ENCODE measurements at regions of chr13 and their contacts with region 1.

Region 1: DNA sequence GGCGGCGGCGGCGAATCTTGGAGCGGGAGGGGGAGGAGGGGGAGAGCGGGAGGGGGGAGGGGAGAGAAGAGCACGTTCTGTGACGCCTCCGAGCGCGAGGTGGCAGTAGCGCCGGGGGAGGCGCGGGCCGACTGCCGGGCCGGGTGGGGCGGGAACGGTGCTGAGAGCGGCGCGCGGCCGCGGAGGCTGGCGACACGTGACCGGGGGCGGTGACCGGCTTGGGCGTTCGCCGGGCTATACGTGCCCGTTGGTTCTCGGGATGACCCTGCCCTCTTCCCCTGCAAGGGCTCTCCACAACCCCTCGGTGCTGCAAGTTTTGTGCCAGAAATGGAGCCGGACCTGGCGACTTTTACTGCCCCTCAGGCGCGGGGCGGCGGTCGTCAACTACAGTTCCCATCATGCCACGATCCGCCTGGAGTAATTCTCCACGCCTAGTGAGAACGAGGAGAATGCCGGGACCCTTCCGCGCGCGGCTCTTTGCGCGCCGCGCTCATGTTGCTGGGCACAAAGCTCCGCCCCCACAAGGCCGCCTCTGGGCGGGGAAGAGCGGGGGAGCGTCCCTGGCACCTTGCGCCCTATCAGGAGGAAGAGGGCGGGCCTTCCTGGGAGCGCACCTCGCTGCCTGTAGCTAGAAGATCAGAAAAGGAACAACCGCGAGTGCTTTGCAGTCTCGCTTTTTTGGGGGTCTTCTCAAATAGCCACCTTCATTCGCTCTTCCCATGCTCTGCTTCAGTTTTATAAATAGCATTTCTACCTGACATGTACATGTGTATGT is at the start of gene KPNA3:
- DNase-seq: peak; percentile 94 to 96 (median 95)
- H3K4me3 ChIP-seq: peak within 1 kb of the TSS; percentile 74 to 80
- H3K4me3 Mint-ChIP-seq: peak within 1 kb of the TSS; percentile 96 to 99 (median 97)
- H3K27ac ChIP-seq: peak within 1 kb of the TSS; percentile 74
- H3K27ac Mint-ChIP-seq: peak within 1 kb of the TSS; percentile 92 to 98 (median 98)
- H3K4me1 ChIP-seq: peaks cover 37% of the 10 kb centered on the region
- H3K4me1 Mint-ChIP-seq: peaks cover 22 to 42% (median 36%) of the 10 kb centered on the region in 4 donors
- H3K27me3 ChIP-seq: no peaks in the 10 kb centered on the region
- H3K27me3 Mint-ChIP-seq: peaks cover 0 to 5% of the 10 kb centered on the region in 2 donors
- total RNA-seq, gene KPNA3: 21.1 to 22.4 TPM

Region 2: DNA sequence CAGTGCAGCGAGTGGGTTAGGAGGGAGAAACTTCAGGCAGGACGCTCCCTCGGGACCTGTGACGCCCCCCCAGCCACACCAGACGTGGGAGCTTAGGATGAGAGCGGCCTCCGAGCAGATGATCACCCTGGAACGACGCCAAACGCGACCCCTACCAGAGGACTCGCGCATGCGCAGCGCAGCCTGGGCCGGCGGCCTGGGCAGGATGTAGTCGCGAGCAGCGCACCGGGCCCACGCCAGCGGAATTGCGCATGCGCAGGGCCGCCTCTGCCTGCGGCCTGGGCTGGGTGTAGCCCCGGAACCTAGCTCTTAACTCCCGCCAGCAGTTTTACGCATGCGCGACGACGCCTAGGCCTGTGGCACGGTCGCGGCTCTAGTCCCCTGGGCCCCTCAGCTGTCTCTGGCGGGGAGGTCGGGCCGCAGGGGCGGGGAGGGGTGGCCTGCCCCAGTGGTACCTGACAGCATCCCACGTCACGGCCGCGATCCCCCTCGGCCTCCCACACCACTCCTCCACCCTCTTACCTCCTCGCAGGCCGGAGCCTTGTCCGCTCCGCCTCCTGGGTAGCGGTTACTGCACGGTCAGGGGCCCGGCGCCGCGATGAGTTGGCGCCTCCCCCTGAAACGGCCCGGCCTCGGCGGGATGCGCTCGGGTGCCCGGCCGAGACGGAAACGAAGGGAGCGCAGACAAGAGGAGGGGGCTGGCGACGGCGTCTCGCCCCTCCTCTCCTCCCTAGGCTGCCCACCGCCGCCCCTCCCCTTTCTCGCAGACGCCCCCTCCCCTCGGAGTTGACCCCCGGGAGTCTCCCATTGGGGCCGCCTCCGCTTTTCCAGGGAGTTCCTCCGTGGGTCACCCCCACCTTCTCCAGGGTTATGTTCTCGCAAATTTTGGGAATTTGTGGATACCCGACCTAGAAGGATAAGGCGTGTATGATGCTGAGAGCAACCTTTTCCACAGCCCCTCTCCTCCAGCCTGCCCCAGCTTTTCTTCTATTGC is 1259.9 kb before region 1 on chr13 and contains the start of gene RCBTB2:
- CTCF ChIA-PET with region 1: no interaction called
- POLR2A ChIA-PET with region 1: no interaction called
- intact Hi-C with region 1: loop called (anchors 2 kb)
- DNase-seq: peak; percentile 97 to 99 (median 98)
- H3K4me3 ChIP-seq: peak within 1 kb of the TSS; percentile 70 to 75
- H3K4me3 Mint-ChIP-seq: peak within 1 kb of the TSS; percentile 92 to 98 (median 94)
- H3K27ac ChIP-seq: peak within 1 kb of the TSS; percentile 92
- H3K27ac Mint-ChIP-seq: peak within 1 kb of the TSS; percentile 97 to 99 (median 99)
- H3K4me1 ChIP-seq: peaks cover 46% of the 10 kb centered on the region
- H3K4me1 Mint-ChIP-seq: peaks cover 20 to 55% (median 36%) of the 10 kb centered on the region in 4 donors
- H3K27me3 ChIP-seq: no peaks in the 10 kb centered on the region
- H3K27me3 Mint-ChIP-seq: no peaks in the 10 kb centered on the region
- total RNA-seq, gene RCBTB2: 23.9 to 25.7 TPM

Region 3: GRCh38 chr13:49443704-49444523 is 348.8 kb before region 1 on chr13 and contains the starts of genes CAB39L and SETDB2:
- CTCF ChIA-PET with region 1: no interaction called
- POLR2A ChIA-PET with region 1: interaction called, 35 read pairs
- intact Hi-C with region 1: loop called (anchors 1 kb)
- DNase-seq: peak; percentile 99 to 100 (median 100)
- H3K4me3 ChIP-seq: peak within 1 kb of the TSS; percentile 72 to 88
- H3K4me3 Mint-ChIP-seq: peak within 1 kb of the TSS; percentile 92 to 98 (median 96)
- H3K27ac ChIP-seq: peak within 1 kb of the TSS; percentile 79
- H3K27ac Mint-ChIP-seq: peak within 1 kb of the TSS; percentile 93 to 99 (median 99)
- H3K4me1 ChIP-seq: peaks cover 50% of the 10 kb centered on the region
- H3K4me1 Mint-ChIP-seq: peaks cover 28 to 58% (median 41%) of the 10 kb centered on the region in 4 donors
- H3K27me3 ChIP-seq: no peaks in the 10 kb centered on the region
- H3K27me3 Mint-ChIP-seq: no peaks in the 10 kb centered on the region
- total RNA-seq, gene CAB39L: 5.7 to 7.7 TPM
- total RNA-seq, gene SETDB2: 27.6 to 28.2 TPM

Region 4: DNA sequence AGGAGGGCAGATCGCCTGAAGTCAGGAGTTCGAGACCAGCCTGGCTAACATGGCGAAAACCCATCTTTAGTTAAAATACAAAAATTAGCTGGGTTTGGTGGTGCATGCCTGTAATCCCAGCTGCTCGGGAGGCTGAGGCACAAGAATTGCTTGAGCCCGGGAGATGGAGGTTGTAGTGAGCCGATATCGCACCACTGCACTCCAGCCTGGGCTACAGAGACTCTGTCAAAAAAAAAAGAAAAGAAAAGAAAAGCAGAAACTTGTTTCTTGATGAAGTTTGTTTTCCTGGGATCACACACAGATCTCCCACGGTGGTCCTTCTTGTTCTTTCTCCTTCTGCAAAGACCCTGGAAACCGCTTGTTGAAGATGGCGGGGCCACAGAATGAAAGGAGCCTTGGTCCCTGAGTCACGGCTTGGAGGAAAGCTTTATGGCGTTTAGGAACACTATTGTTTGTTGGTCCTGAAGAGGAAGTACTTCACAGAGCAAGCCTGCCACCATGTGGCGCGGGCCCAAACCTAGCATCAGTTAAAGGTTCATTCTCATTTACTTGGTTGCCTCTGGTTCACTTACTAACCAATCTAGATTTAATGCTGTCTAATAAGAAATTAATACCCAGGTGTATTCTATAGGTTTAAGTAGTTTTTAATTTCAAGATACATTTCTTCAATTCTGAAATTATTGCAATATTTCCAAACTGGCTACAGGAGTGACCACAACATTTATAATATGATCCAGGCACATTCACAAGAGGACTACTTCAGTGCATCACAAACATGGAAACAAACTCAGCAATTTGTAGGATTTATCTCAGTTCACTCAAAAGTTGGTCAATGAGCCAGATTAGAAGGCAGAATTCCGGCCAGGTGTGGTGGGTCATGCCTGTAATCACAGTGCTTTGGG is 185.7 kb before region 1 on chr13:
- CTCF ChIA-PET with region 1: interaction called, 3 read pairs
- POLR2A ChIA-PET with region 1: no interaction called
- intact Hi-C with region 1: loop called (anchors 5 kb)
- DNase-seq: peak; percentile 72 to 78 (median 77)
- H3K4me3 ChIP-seq: peak overlapping the region in 1 of 2 donors; percentile 13
- H3K4me3 Mint-ChIP-seq: peak overlapping the region; percentile 82 to 95 (median 89)
- H3K27ac ChIP-seq: no peak overlapping the region
- H3K27ac Mint-ChIP-seq: peak overlapping the region in 6 of 7 donors; percentile 22 to 95 (median 72)
- H3K4me1 ChIP-seq: no peaks in the 10 kb centered on the region
- H3K4me1 Mint-ChIP-seq: peaks cover 2 to 5% (median 3%) of the 10 kb centered on the region in 4 donors
- H3K27me3 ChIP-seq: no peaks in the 10 kb centered on the region
- H3K27me3 Mint-ChIP-seq: no peaks in the 10 kb centered on the region

Region 5: DNA sequence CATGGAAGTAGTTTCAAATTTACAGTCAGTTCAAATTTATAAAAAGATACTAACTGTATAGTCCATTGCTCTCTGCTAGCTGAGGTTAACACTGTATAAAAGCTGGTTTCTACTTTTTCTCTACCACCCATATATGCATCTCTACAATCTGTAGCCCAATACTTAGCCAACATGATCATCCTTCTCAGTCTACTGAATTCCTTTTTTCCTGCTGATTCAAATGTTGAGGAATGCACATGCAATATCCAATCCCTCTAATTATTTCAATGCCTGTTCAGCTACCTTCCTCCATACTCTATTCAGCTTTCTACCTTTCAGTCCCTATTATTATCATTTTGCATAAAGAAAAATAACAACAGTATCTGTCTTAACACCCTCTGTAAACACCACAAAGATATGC is 15.9 kb before region 1 on chr13:
- CTCF ChIA-PET with region 1: interaction called, 6 read pairs
- POLR2A ChIA-PET with region 1: interaction called, 12 read pairs
- intact Hi-C with region 1: no loop called
- DNase-seq: no peak
- H3K4me3 ChIP-seq: no peak overlapping the region
- H3K4me3 Mint-ChIP-seq: no peak overlapping the region
- H3K27ac ChIP-seq: no peak overlapping the region
- H3K27ac Mint-ChIP-seq: peak overlapping the region in 1 of 7 donors; percentile 24
- H3K4me1 ChIP-seq: peaks cover 16% of the 10 kb centered on the region
- H3K4me1 Mint-ChIP-seq: peaks cover 41 to 66% (median 50%) of the 10 kb centered on the region in 4 donors
- H3K27me3 ChIP-seq: no peaks in the 10 kb centered on the region
- H3K27me3 Mint-ChIP-seq: no peaks in the 10 kb centered on the region

Region 6: DNA sequence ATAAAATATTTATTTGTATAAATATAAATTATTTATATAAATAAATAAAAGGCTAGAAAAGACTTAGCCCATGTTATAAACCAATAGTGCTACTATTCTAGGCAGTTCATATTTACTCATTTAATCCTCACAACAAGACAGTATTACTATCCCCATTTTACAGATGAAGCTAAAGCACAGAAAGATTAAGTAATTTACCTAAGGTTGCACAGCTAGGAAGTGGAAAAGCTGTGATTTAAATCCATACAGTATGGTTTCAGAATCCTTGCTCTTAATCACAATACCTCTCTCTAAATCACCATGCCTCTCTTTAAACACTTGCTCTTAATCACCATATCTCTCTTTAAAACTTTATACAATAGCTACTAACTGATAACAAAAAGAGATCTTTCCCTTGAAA is 129.6 kb after region 1 on chr13:
- CTCF ChIA-PET with region 1: no interaction called
- POLR2A ChIA-PET with region 1: no interaction called
- intact Hi-C with region 1: no loop called
- DNase-seq: no peak
- H3K4me3 ChIP-seq: no peak overlapping the region
- H3K4me3 Mint-ChIP-seq: no peak overlapping the region
- H3K27ac ChIP-seq: no peak overlapping the region
- H3K27ac Mint-ChIP-seq: no peak overlapping the region
- H3K4me1 ChIP-seq: no peaks in the 10 kb centered on the region
- H3K4me1 Mint-ChIP-seq: no peaks in the 10 kb centered on the region
- H3K27me3 ChIP-seq: no peaks in the 10 kb centered on the region
- H3K27me3 Mint-ChIP-seq: no peaks in the 10 kb centered on the region

Region 7: DNA sequence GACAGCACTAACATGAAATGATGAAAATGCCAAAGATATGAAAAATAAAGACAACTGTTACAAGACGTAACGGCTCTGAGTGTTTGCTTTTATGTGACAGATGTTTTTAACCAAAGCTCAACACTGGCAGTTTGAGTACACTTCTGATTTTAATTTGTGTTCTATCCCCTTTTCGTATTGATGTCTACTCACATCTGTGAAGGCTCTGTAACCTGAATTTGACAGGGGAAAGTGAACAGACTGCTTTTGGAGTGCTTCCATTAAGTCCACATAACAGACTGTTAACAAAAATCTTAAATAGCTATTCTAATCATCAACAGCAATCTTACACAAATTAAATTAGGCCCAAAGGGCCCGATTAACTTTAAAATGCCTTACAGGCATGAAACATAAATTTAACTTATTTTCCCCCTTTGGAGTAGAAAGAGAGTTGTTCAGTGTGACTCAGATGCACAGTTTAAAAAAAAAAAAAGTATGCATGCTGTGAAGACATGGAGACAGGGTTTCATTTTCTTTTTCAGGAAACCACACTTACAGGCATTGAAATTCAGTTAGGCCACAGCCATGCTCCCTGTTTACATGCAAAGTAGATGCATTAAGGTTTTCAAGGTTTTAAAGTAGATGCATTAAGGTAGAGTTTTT is 1100.6 kb after region 1 on chr13:
- CTCF ChIA-PET with region 1: no interaction called
- POLR2A ChIA-PET with region 1: interaction called, 9 read pairs
- intact Hi-C with region 1: loop called (anchors 2 kb)
- DNase-seq: peak; percentile 43 to 71 (median 59)
- H3K4me3 ChIP-seq: peak overlapping the region; percentile 42 to 50
- H3K4me3 Mint-ChIP-seq: peak overlapping the region; percentile 69 to 85 (median 82)
- H3K27ac ChIP-seq: peak overlapping the region; percentile 69
- H3K27ac Mint-ChIP-seq: peak overlapping the region; percentile 78 to 97 (median 95)
- H3K4me1 ChIP-seq: peaks cover 45% of the 10 kb centered on the region
- H3K4me1 Mint-ChIP-seq: peaks cover 35 to 46% (median 39%) of the 10 kb centered on the region in 4 donors
- H3K27me3 ChIP-seq: no peaks in the 10 kb centered on the region
- H3K27me3 Mint-ChIP-seq: peaks cover 0 to 2% of the 10 kb centered on the region in 2 donors

Measured in CD4-positive, alpha-beta memory T cell (primary cell).